ENCODE measurements at regions of chr5 and their contacts with region 1.

Region 1: GRCh38 chr5:150559686-150560085 is 51.8 kb downstream of the NDST1 start:
- DNase-seq: no peak
- H3K4me3 ChIP-seq: no peak overlapping the region
- CTCF ChIP-seq: no peak

Region 2: GRCh38 chr5:150511578-150512367 is 47.9 kb before region 1 on chr5:
- in situ Hi-C with region 1: loop called (anchors 5 kb)
- DNase-seq: no peak
- H3K4me3 ChIP-seq: no peak overlapping the region
- CTCF ChIP-seq: no peak

Region 3: DNA sequence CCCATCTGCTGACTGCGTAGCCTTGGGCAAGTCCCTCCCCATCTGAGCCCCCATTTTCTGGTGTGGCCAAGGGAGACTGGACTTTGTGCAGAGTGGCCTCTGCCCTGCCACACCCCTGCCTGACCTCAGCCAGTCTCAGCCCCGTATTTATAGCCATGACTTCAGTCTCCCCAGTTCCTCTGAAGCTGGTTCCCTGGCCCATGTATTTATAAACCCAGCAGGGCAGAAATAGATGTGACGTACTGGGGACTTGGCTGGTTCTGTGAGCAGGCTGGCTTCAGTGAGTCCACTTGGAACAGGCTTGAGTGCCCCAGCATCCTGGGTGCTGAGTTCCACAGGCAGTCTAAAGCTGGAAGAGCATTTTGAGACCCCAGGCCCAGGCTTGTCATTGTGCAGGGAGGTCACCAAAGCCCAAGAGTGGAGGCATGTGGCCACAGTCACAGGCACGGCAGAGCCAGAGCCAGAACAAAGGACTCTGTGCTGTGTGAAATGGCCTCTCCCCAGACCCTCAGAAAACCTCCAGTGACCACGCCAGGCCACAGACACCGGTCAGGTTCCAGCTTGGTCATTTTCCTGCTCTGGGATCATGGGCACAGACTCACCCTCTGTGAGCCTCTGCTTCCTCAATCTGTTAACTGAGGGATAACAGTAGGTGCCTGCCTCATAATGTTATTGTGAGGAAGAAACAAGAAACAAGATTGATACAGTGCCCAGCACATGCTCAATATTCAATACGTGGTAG is 50.3 kb after region 1 on chr5:
- in situ Hi-C with region 1: no loop called
- DNase-seq: no peak
- H3K4me3 ChIP-seq: no peak overlapping the region
- CTCF ChIP-seq: no peak

Region 4: DNA sequence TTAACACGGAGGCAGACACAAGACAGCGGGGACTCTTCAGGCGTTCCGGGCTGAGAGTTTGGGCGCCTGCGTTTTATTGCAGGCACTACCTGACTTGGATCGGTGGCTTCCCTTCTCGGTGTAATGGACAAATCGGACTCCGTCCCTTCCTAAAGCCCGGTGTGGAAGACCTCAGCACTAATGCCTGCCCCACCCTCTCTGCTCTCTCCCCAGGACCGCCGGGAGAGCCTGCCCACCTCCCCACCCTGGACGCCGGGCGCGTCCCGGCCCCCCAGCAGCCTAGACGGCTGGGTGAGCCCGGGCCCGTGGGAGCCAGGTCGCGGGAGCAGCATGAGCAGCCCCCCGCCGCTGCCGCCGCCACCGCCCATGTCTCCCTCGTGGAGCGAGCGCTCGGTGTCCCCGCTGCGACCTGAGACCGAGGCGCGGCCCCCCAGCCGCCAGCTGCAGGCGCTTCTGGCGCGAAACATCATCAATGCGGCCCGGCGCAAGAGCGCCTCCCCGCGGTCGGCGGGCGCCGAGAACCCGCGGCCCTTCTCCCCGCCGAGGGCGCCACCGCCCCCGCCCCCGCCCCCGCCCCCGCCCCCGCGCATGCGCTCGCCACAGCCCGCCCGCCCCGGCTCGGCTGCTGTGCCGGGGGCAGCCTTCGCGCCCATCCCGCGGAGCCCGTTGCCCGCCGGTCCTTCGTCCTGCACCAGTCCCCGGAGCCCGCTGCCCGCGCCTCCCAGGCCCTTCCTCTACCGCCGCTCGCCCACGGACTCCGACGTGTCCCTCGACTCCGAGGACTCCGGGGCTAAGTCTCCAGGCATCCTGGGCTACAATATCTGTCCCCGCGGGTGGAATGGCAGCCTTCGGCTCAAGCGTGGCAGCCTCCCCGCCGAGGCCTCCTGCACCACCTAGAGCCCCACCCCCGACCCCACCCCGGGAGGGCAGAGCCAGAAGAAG is 96.8 kb after region 1 on chr5:
- in situ Hi-C with region 1: loop called (anchors 5 kb)
- DNase-seq: no peak
- H3K4me3 ChIP-seq: peak overlapping the region; percentile 45
- CTCF ChIP-seq: peak; percentile 55

Region 5: GRCh38 chr5:150700594-150701293 is 141.1 kb after region 1 on chr5 and contains the start of gene RBM22:
- in situ Hi-C with region 1: loop called (anchors 5 kb)
- DNase-seq: peak; percentile 74
- H3K4me3 ChIP-seq: peak within 1 kb of the TSS; percentile 96
- CTCF ChIP-seq: peak; percentile 61